ENCODE measurements at regions of chr19 and their contacts with region 1.

Region 1: DNA sequence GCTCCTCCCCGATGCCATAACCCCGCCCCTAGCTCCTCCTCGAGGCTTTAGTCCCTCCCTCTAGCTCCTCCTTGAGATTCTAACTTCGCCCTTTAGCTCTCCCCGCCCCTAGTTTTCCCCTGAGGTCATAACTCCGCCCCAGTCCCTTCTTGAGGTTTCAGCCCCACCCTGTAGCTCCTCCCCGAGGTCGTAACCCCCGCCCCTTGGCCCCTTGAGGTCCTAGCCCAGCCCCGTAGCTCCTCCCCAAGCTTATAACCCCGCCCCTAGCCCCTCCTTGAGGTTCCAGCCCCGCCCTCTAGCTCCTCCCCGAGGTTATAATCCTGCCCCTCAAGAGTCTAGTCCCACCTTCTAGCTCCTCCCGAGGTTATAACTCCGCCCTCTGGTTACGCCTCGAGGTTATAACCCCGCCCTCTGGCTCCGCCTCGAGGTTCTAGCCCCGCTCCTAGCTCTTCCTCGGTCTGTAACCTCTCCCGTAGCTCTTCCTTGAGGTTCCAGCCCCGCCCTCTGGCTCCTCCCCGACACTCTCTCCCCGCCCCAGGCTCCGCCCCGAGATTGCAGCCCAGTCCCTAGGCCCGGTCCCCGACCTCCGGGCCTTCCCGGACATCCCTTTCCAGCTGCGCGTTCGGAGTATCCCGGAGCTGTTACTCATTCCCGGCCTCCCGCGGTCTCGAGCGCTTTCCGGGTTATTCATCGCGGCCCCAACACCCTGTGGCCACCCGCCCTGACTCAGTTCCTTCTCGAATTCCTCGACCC is 1.4 kb downstream of the PLAUR start:
- DNase-seq: peak; percentile 97
- H3K4me3 ChIP-seq: peak overlapping the region; percentile 92
- CTCF ChIP-seq: no peak

Region 2: DNA sequence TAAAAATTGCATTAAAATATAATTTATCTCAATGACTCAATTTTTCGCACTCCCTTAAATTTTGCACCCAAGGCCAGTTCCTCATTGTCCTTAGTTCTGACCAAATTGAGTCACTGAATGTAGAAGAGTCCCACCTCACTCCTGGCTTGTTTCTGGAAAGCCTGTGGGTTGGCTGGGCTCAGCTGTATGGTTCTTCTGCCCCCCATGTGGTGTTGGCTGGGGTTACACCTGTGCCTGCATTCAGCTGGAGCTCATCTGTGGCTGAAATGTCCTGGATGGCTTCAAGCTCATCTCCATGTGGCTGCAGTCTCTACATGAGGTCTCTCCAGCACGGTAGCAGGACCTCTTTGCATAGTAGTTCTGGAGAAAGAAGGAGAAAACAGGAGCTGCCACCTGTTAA is 40.1 kb after region 1 on chr19:
- CTCF ChIA-PET with region 1: no interaction called
- POLR2A ChIA-PET with region 1: no interaction called
- DNase-seq: no peak
- H3K4me3 ChIP-seq: no peak overlapping the region
- CTCF ChIP-seq: no peak

Region 3: DNA sequence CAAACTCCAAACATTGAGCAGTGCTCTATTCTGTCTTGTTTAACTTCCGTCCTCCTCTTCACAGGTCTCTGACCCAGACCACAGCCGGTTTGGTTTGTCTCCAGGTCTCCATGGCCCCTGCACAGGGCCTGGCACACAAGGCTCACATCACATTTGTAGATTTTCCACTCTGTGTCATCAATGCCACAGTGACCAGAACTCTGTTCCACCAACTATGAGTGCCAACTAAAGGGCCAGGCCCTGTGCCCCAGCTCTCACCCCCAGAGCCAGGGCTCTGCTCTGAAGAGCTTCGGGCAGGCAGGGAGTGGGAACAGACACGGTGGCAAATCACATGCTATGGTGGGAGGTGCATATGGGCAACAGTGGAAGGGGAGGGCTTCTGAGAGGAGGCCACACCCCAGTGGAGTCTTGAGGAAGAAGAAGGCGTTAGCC is 70.2 kb after region 1 on chr19:
- CTCF ChIA-PET with region 1: interaction called, 14 read pairs
- POLR2A ChIA-PET with region 1: interaction called, 4 read pairs
- DNase-seq: no peak
- H3K4me3 ChIP-seq: no peak overlapping the region
- CTCF ChIP-seq: no peak

Region 4: DNA sequence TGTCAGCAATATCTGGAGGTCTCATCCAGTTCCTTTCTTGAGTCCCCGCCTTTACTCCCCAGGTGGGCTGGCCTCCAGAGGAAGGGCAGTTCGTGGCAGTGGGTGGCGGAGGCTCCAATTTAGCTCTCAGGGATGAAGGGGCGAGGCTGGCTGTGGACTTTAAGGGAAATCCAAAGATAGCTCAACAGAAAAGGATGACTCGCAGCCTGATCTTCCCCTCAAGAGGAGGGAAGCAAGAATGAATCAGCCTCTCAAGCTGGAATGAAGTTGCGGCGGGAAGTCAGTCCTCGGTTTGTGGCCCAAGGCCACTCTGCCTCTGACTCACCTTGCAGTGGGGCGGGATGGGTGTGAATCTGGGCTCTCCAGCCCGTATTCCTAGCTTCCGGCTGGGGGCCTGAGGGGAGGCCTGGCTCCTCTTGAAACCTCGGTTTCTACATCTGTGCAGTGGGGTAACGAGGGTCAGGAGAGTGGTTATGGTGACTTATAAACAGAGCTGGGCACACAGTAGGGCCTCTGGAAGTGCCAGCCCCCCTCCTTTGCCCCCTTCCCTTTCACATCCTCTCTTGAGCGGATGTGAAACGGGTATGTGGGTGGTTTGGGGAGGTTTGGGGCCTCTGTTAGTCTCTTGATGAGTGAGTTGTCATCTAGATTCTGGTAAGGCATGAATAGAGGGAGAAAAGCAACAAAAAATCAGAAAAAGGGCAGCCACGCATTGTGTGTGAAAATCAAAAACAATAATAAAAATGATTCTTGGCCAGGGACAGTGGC is 96.7 kb after region 1 on chr19:
- CTCF ChIA-PET with region 1: interaction called, 5 read pairs
- POLR2A ChIA-PET with region 1: interaction called, 18 read pairs
- DNase-seq: peak; percentile 87
- H3K4me3 ChIP-seq: no peak overlapping the region
- CTCF ChIP-seq: no peak

Measured in AG04449 (cell line).